Activated CD4-positive, alpha-beta memory T cell treated with anti-CD3 and anti-CD28 coated beads for 36 hours (primary cell): ENCODE measurements at regions of chr9 and their contacts with region 1.

Region 1: DNA sequence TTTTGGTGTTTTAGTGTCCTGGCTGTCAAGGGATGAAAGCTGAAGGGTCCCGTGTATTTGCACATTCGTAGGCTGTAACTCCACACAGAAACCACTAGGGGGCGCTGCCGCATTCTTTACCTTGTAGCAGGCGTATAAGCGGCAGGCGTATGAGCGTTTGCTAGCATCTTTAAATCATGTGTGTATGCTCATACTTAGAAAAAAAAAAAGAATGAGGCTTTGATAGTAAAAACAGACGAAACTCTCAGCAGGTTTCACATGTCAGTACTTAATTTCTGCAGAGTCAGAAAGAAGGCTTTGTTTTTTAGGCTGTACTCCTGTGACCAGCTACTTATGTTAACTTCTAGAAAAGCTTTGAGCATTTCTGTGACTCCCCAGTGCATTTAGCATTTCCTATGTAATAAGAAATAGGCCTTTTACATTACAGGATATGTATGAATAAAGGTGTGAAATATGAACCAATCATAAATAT is 218.8 kb upstream of the ADAMTSL1 start:
- DNase-seq: peak; percentile 79
- H3K4me3 Mint-ChIP-seq: no peak overlapping the region
- H3K27ac Mint-ChIP-seq: no peak overlapping the region
- H3K4me1 Mint-ChIP-seq: peaks cover 3% of the 10 kb centered on the region
- H3K27me3 Mint-ChIP-seq: peaks cover 8% of the 10 kb centered on the region

Region 2: GRCh38 chr9:18237776-18238175 is 17.4 kb before region 1 on chr9:
- CTCF ChIA-PET with region 1: interaction called, 25 read pairs
- POLR2A ChIA-PET with region 1: no interaction called
- intact Hi-C with region 1: no loop called
- DNase-seq: no peak
- H3K4me3 Mint-ChIP-seq: no peak overlapping the region
- H3K27ac Mint-ChIP-seq: no peak overlapping the region
- H3K4me1 Mint-ChIP-seq: peaks cover 2% of the 10 kb centered on the region
- H3K27me3 Mint-ChIP-seq: peaks cover 2% of the 10 kb centered on the region

Region 3: DNA sequence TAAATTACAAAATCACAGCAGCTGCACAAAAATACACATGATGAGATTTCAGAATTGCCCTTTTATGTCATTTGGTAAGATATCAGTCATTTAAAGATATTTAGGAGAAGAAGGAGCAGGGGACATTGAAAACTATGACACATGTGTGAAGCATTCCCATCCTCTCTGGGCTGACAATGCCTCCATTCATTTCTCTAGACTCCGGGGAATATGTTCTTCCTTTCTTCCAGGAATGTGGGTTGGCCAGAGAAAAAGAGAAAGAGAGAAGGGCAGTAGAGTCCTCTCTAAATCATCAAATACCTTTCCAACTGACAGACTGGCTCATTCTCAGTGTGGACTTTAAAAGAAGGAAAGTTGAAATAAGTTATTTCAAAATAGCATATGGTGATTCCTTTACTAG is 13.2 kb after region 1 on chr9:
- CTCF ChIA-PET with region 1: interaction called, 27 read pairs
- POLR2A ChIA-PET with region 1: no interaction called
- intact Hi-C with region 1: no loop called
- DNase-seq: no peak
- H3K4me3 Mint-ChIP-seq: no peak overlapping the region
- H3K27ac Mint-ChIP-seq: no peak overlapping the region
- H3K4me1 Mint-ChIP-seq: no peaks in the 10 kb centered on the region
- H3K27me3 Mint-ChIP-seq: no peaks in the 10 kb centered on the region

Region 4: GRCh38 chr9:18442629-18443491 is 187.7 kb after region 1 on chr9:
- CTCF ChIA-PET with region 1: interaction called, 35 read pairs
- POLR2A ChIA-PET with region 1: no interaction called
- intact Hi-C with region 1: loop called (anchors 1 kb)
- DNase-seq: peak; percentile 65
- H3K4me3 Mint-ChIP-seq: no peak overlapping the region
- H3K27ac Mint-ChIP-seq: no peak overlapping the region
- H3K4me1 Mint-ChIP-seq: peaks cover 3% of the 10 kb centered on the region
- H3K27me3 Mint-ChIP-seq: peaks cover 11% of the 10 kb centered on the region

Region 5: GRCh38 chr9:19018201-19018600 is 763.0 kb after region 1 on chr9:
- CTCF ChIA-PET with region 1: interaction called, 3 read pairs
- POLR2A ChIA-PET with region 1: no interaction called
- intact Hi-C with region 1: loop called (anchors 5 kb)
- DNase-seq: no peak
- H3K4me3 Mint-ChIP-seq: no peak overlapping the region
- H3K27ac Mint-ChIP-seq: no peak overlapping the region
- H3K4me1 Mint-ChIP-seq: peaks cover 3% of the 10 kb centered on the region
- H3K27me3 Mint-ChIP-seq: peaks cover 6% of the 10 kb centered on the region

Region 6: GRCh38 chr9:19028835-19029451 is 773.7 kb after region 1 on chr9:
- CTCF ChIA-PET with region 1: interaction called, 24 read pairs
- POLR2A ChIA-PET with region 1: no interaction called
- intact Hi-C with region 1: no loop called
- DNase-seq: peak; percentile 25
- H3K4me3 Mint-ChIP-seq: no peak overlapping the region
- H3K27ac Mint-ChIP-seq: no peak overlapping the region
- H3K4me1 Mint-ChIP-seq: peaks cover 8% of the 10 kb centered on the region
- H3K27me3 Mint-ChIP-seq: peaks cover 14% of the 10 kb centered on the region

Region 7: DNA sequence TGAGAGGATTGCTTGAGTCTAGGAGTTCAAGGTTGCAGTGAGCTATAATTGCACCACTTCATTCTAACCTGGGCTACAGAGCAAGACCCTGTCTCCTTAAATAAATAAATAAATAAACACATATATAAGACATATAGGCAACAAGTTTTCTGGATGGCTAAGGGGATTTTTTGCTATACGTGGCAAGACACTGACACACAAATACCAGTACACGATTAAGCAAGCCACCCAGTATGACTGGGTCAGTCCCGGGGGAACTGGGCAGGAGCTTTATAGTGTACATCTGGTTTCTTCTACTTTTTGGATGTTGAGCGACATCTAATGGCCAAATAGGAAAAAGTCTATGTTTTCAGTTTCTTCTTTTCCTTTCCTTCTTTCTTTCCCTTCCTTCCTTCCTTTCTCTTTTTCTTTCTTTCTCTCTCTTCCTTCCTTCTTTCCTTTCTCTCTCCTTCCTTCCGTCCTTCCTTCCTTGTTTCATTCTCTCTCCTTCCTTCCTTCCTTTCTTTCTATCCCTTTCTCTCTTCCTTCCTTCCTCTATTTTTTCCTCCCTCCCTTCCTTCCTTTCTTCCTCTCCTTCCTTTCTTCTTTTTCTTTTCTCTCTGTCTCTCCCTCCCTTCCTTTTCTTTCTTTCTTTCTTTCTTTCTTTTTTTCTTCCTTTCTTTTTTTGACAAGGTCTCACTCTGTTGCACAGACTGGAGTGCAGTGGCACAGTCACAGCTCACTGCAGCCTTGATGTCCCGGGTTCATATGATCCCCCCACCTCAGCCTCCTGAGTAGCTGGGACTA is 919.1 kb after region 1 on chr9:
- CTCF ChIA-PET with region 1: interaction called, 10 read pairs
- POLR2A ChIA-PET with region 1: no interaction called
- intact Hi-C with region 1: loop called (anchors 5 kb)
- DNase-seq: peak; percentile 79
- H3K4me3 Mint-ChIP-seq: no peak overlapping the region
- H3K27ac Mint-ChIP-seq: no peak overlapping the region
- H3K4me1 Mint-ChIP-seq: peaks cover 22% of the 10 kb centered on the region
- H3K27me3 Mint-ChIP-seq: no peaks in the 10 kb centered on the region